ENCODE measurements at regions of chr16 and their contacts with region 1.

Region 1: DNA sequence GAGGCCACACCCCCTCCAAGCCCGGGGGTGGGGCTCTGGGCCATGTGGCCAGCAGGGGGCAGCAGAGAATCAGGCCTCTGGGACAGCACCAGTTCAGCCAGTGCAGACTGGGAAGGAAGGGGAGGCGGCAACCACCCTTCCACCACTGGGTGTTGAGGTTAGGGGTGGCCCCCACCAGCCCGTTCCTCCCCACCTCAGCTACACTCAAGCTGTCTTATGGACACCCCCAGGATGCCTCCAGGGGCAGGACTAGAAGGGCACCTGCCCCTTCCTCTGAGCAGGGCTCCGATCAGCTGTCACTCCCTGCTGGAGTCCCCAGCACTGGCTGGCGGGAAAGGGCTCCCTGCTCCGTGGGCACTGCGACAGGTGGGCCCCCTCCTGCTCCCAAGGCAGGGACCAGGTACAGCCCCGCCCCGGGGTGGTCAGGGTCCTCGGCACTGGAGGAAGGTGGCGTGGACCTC is 21.8 kb downstream of the KATNB1 start:
- DNase-seq: peak; percentile 93
- ATAC-seq: peak; percentile 92

Region 2: GRCh38 chr16:57701759-57702371 is 55.5 kb before region 1 on chr16:
- intact Hi-C with region 1: no loop called
- DNase-seq: no peak
- ATAC-seq: no peak

Region 3: GRCh38 chr16:57801856-57802340 is 44.5 kb after region 1 on chr16:
- intact Hi-C with region 1: loop called (anchors 2 kb)
- DNase-seq: no peak
- ATAC-seq: peak; percentile 22

Region 4: GRCh38 chr16:57863434-57864160 is 106.2 kb after region 1 on chr16:
- intact Hi-C with region 1: loop called (anchors 1 kb)
- DNase-seq: no peak
- ATAC-seq: peak; percentile 88

Region 5: DNA sequence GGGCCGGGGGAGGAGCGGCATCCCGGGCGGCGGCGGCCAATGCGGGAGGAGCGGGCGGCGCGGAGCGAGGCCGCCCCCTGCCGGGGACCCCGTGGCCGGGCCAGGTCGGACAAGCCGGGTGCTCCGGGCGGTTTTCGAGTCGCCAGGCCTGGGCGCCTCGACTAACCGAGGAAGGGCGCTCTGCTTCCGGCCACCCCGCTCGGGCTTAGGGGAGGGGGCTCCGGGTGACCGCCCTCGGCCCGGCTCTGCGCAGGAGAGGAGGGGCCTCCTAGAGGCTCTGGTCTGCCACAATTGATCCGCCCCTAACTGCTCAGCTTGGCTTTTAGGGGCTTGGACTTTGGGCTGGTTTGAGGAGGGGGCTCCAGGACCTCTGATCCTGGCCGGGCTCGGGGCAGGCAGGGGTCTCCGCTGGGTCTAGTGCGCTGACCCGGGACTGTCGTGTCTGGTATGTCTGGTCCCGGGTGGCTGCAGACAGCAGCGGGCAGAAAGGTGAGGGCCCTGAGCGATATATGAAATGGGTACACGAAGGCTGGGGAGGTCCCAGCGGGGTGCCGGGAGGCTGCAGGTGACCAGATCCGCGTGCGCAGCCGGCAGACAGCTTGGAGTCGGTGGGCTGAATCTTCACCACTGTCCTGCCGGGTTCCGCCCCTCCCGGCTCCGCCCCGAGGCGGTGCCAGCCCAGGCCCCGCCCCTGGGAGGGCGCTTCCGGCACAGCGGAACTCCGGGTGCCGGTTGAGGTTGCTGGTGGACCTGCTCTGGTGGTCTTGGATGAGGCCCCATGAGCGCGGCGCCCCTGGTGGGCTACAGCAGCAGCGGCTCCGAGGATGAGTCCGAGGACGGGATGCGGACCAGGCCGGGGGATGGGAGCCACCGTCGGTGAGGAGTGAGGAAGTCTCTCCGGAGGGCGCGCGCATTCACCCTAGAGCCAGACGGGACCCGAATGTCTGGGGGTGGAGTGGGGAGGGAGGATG is 243.6 kb after region 1 on chr16 and contains the start of gene USB1:
- intact Hi-C with region 1: loop called (anchors 10 kb)
- DNase-seq: peak; percentile 93
- ATAC-seq: peak; percentile 94
- total RNA-seq, gene USB1: 36.2 TPM

Measured in Right ventricle myocardium inferior (tissue), 1 donor.